Caco-2 (cell line): ENCODE measurements at regions of chr1 and their contacts with region 1.

Region 1: DNA sequence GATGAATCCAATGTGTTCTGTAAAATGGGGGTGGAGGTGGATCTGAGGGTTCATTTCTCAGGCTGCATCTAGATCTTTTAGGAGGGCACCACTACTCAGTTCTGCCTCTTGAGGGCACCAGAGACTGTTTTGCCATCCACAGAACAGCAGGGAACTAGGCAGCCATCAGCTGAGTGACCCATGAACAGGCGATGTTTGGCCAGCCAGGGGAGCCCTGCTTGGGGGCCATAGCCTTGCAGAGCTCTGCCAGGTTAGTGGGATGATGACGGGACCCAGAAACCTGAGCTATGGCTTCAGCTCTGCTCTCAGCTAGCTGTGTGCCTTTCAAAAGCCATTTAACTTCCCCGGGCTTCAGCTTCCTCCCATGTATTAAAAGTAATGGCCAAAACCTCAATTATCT is 13.4 kb upstream of the NOS1AP start:
- DNase-seq: peak; percentile 75 to 79
- H3K4me3 ChIP-seq: no peak overlapping the region
- H3K4me3 Mint-ChIP-seq: no peak overlapping the region
- H3K27ac Mint-ChIP-seq: no peak overlapping the region
- H3K4me1 ChIP-seq: no peaks in the 10 kb centered on the region
- H3K4me1 Mint-ChIP-seq: peaks cover 7% of the 10 kb centered on the region
- H3K27me3 ChIP-seq: no peaks in the 10 kb centered on the region
- H3K27me3 Mint-ChIP-seq: peaks cover 3% of the 10 kb centered on the region
- CTCF ChIP-seq: peak; percentile 91 to 95

Region 2: DNA sequence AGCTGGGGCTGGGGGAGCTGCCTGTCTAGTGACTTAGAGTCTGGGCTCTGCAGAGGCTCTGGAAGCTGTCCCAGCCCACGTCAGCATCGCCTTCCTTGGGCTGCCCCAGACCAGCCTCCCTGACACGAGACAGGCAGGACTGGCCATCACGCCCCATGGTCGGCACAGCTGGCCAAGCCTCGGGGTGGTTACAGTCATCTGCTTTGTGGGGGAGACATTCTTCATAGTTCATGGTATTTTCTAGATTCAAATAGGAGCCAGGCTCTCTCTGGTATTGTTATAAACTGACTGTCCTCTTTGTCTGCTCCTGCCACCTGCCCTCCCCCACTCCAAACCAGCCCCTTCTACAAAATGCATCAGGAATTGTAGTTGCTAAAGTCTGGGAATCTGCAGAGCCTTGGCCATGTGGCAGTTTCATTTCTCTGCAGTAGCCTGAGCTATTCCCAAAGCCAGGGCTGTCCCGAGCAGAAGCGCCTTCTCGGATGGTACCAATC is 61.8 kb before region 1 on chr1:
- CTCF ChIA-PET with region 1: no interaction called
- POLR2A ChIA-PET with region 1: no interaction called
- intact Hi-C with region 1: no loop called
- DNase-seq: no peak
- H3K4me3 ChIP-seq: no peak overlapping the region
- H3K4me3 Mint-ChIP-seq: no peak overlapping the region
- H3K27ac Mint-ChIP-seq: no peak overlapping the region
- H3K4me1 ChIP-seq: no peaks in the 10 kb centered on the region
- H3K4me1 Mint-ChIP-seq: no peaks in the 10 kb centered on the region
- H3K27me3 ChIP-seq: no peaks in the 10 kb centered on the region
- H3K27me3 Mint-ChIP-seq: peaks cover 2% of the 10 kb centered on the region
- CTCF ChIP-seq: no peak

Region 3: DNA sequence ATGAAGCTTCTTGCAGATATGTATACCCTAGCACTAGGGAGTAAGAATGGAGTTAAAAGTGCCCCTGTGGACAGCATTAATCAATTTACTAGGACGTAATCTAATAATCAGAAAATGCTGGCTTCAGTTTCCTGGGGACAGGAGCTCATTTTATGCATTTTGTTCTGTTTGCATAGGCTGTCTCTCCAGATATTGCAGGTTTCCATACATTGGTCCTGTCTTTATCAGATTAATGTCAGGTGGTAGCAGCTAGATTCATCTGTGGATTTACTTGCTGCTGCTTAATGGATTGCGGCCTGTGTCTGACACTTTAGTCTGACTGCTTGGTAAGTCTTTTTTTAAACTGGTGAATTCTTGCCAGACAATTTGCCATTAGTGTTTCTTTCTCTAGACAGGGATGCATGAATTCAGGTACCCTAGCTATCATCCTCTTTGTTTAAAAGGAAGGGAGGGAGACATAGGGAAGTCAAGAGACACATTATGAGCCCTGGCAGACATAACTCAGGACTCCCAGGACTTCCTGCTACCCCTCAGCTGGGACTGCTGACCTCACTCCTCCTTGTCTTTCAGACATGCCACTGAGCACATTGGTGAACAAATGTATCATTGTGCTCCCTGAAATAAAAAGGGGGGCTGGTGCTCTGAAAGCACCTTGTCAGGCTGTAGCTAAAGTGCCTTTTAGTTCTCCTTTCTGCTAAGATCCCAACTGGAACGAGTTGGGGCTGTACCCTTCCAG is 61.2 kb after region 1 on chr1:
- CTCF ChIA-PET with region 1: no interaction called
- POLR2A ChIA-PET with region 1: no interaction called
- intact Hi-C with region 1: no loop called
- DNase-seq: no peak
- H3K4me3 ChIP-seq: no peak overlapping the region
- H3K4me3 Mint-ChIP-seq: no peak overlapping the region
- H3K27ac Mint-ChIP-seq: no peak overlapping the region
- H3K4me1 ChIP-seq: peaks cover 2% of the 10 kb centered on the region; the same call in 1 of the 2 replicates
- H3K4me1 Mint-ChIP-seq: no peaks in the 10 kb centered on the region
- H3K27me3 ChIP-seq: no peaks in the 10 kb centered on the region
- H3K27me3 Mint-ChIP-seq: no peaks in the 10 kb centered on the region
- CTCF ChIP-seq: no peak

Region 4: GRCh38 chr1:162145280-162145965 is 89.4 kb after region 1 on chr1:
- CTCF ChIA-PET with region 1: interaction called, 4 read pairs
- POLR2A ChIA-PET with region 1: no interaction called
- intact Hi-C with region 1: loop called (anchors 5 kb)
- DNase-seq: no peak
- H3K4me3 ChIP-seq: no peak overlapping the region
- H3K4me3 Mint-ChIP-seq: no peak overlapping the region
- H3K27ac Mint-ChIP-seq: no peak overlapping the region
- H3K4me1 ChIP-seq: peaks cover 27% of the 10 kb centered on the region
- H3K4me1 Mint-ChIP-seq: peaks cover 17% of the 10 kb centered on the region
- H3K27me3 ChIP-seq: no peaks in the 10 kb centered on the region
- H3K27me3 Mint-ChIP-seq: no peaks in the 10 kb centered on the region
- CTCF ChIP-seq: no peak

Region 5: DNA sequence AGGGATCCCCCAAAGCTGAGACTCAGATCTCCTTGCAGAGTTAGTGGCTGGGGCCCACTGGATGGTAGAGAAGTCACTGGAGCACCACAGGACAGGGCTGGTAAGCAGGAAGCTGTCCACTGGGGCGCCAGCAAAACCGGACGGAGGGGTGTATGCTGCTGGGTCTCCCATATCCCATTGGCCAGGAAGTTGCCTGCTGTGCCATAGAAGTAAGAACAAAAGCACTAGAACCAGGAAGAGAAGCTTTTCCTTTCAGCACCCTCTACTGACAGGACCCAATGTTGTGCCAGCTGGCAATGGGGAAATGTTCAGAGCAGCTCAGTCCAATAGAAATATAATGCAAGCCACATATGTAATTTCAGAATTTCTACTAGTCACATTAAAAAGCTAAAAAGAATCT is 174.1 kb after region 1 on chr1:
- CTCF ChIA-PET with region 1: interaction called, 5 read pairs
- POLR2A ChIA-PET with region 1: no interaction called
- intact Hi-C with region 1: loop called (anchors 1 kb)
- DNase-seq: peak in 1 of 2 experiments; percentile 25
- H3K4me3 ChIP-seq: no peak overlapping the region
- H3K4me3 Mint-ChIP-seq: no peak overlapping the region
- H3K27ac Mint-ChIP-seq: no peak overlapping the region
- H3K4me1 ChIP-seq: no peaks in the 10 kb centered on the region
- H3K4me1 Mint-ChIP-seq: peaks cover 11% of the 10 kb centered on the region
- H3K27me3 ChIP-seq: no peaks in the 10 kb centered on the region
- H3K27me3 Mint-ChIP-seq: no peaks in the 10 kb centered on the region
- CTCF ChIP-seq: no peak

Region 6: GRCh38 chr1:162276493-162276892 is 220.4 kb after region 1 on chr1:
- CTCF ChIA-PET with region 1: interaction called, 18 read pairs
- POLR2A ChIA-PET with region 1: no interaction called
- intact Hi-C with region 1: loop called (anchors 1 kb)
- DNase-seq: peak in 1 of 2 experiments; percentile 48
- H3K4me3 ChIP-seq: no peak overlapping the region
- H3K4me3 Mint-ChIP-seq: no peak overlapping the region
- H3K27ac Mint-ChIP-seq: no peak overlapping the region
- H3K4me1 ChIP-seq: no peaks in the 10 kb centered on the region
- H3K4me1 Mint-ChIP-seq: no peaks in the 10 kb centered on the region
- H3K27me3 ChIP-seq: no peaks in the 10 kb centered on the region
- H3K27me3 Mint-ChIP-seq: no peaks in the 10 kb centered on the region
- CTCF ChIP-seq: peak; percentile 50 to 51

Region 7: DNA sequence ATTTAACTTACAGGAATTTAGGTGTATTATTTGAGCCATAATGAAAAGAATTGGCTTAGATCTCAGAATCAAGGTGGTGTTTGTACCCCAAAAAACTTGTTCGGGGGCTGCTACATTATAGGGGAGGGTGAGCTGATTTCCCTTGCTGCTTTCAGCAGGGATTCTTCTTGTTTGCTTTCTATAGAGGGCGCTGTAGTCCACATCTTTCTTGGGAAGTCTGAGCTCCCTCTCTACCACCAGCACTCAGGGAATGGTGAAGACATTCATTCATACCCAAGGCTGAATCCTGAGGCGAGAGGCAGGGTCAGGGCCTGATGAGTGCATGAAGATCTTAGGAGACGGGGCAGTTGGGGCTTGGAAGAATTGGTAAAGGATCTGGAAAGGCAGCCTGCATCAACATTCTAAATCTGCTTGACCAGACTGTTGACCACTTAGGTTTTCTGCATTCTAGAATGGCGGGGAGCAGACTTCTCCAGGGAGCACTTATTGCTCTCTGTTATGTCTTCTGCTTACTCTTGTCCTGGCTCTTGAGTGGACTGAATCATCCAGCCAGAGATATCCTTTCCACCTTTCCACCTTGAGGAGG is 301.7 kb after region 1 on chr1:
- CTCF ChIA-PET with region 1: interaction called, 7 read pairs
- POLR2A ChIA-PET with region 1: no interaction called
- intact Hi-C with region 1: loop called (anchors 2 kb)
- DNase-seq: peak in 1 of 2 experiments; percentile 61
- H3K4me3 ChIP-seq: no peak overlapping the region
- H3K4me3 Mint-ChIP-seq: no peak overlapping the region
- H3K27ac Mint-ChIP-seq: no peak overlapping the region
- H3K4me1 ChIP-seq: no peaks in the 10 kb centered on the region
- H3K4me1 Mint-ChIP-seq: peaks cover 9% of the 10 kb centered on the region
- H3K27me3 ChIP-seq: no peaks in the 10 kb centered on the region
- H3K27me3 Mint-ChIP-seq: no peaks in the 10 kb centered on the region
- CTCF ChIP-seq: peak; percentile 65 to 73